GM12878 (cell line): ENCODE measurements at regions of chr20 and their contacts with region 1.

Region 1: GRCh38 chr20:6212903-6213302 is 90.1 kb upstream of the FERMT1 start:
- DNase-seq: no peak
- ATAC-seq: no peak
- H3K4me3 ChIP-seq: no peak overlapping the region
- H3K27ac ChIP-seq: no peak overlapping the region
- H3K4me1 ChIP-seq: no peaks in the 10 kb centered on the region
- H3K27me3 ChIP-seq: no peaks in the 10 kb centered on the region
- CTCF ChIP-seq: no peak
- EP300 ChIP-seq: no peak
- POLR2A ChIP-seq: no peak
- RAD21 ChIP-seq: no peak

Region 2: DNA sequence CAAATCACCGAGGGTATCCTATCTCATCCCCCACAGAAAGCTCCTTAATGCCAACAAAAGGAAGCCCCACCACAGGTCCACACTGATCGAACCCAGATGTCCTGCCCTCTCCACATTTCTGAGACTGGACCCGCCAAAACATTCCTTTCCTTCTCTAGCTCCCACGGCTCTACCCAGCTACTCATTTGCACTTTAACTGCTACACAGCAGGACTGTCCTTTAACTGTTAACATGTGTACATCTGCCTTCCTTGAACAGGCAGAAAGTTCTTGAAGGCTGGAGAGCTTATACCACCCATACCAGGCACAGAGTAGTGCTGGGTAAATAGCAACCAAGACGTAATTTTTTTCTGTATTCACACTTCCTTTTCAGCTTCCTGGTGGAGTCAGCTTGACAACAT is 331.2 kb before region 1 on chr20:
- CTCF ChIA-PET with region 1: no interaction called
- POLR2A ChIA-PET with region 1: no interaction called
- RAD21 ChIA-PET with region 1: no interaction called
- SMC1A ChIA-PET with region 1: no interaction called
- in situ Hi-C with region 1: no loop called
- intact Hi-C with region 1: no loop called
- DNase-seq: no peak
- ATAC-seq: 0 out of 3 replicates have a peak, but pooled peaks have one; percentile 28
- H3K4me3 ChIP-seq: no peak overlapping the region
- H3K27ac ChIP-seq: no peak overlapping the region
- H3K4me1 ChIP-seq: no peaks in the 10 kb centered on the region
- H3K27me3 ChIP-seq: peaks cover 0 to 6% of the 10 kb centered on the region in 2 experiments; a peak in 3 of 4 replicates
- CTCF ChIP-seq: no peak
- EP300 ChIP-seq: no peak
- POLR2A ChIP-seq: no peak
- RAD21 ChIP-seq: no peak

Region 3: GRCh38 chr20:5991623-5992441 is 221.1 kb before region 1 on chr20:
- CTCF ChIA-PET with region 1: no interaction called
- POLR2A ChIA-PET with region 1: no interaction called
- RAD21 ChIA-PET with region 1: no interaction called
- SMC1A ChIA-PET with region 1: no interaction called
- in situ Hi-C with region 1: no loop called
- intact Hi-C with region 1: no loop called
- DNase-seq: no peak
- ATAC-seq: no peak
- H3K4me3 ChIP-seq: no peak overlapping the region
- H3K27ac ChIP-seq: no peak overlapping the region
- H3K4me1 ChIP-seq: peaks cover under 1% of the 10 kb centered on the region; the same call in 1 of the 2 replicates
- H3K27me3 ChIP-seq: no peaks in the 10 kb centered on the region
- CTCF ChIP-seq: no peak
- EP300 ChIP-seq: no peak
- POLR2A ChIP-seq: no peak
- RAD21 ChIP-seq: no peak

Region 4: GRCh38 chr20:6169251-6169650 is 43.7 kb before region 1 on chr20:
- CTCF ChIA-PET with region 1: no interaction called
- POLR2A ChIA-PET with region 1: no interaction called
- RAD21 ChIA-PET with region 1: no interaction called
- SMC1A ChIA-PET with region 1: no interaction called
- in situ Hi-C with region 1: no loop called
- intact Hi-C with region 1: no loop called
- DNase-seq: no peak
- ATAC-seq: peak; percentile 56; the same call in 2 of the 3 replicates
- H3K4me3 ChIP-seq: no peak overlapping the region
- H3K27ac ChIP-seq: no peak overlapping the region
- H3K4me1 ChIP-seq: no peaks in the 10 kb centered on the region
- H3K27me3 ChIP-seq: no peaks in the 10 kb centered on the region
- CTCF ChIP-seq: peak in 1 of 3 experiments; percentile 11; a peak in 2 of 6 replicates
- EP300 ChIP-seq: no peak
- POLR2A ChIP-seq: no peak
- RAD21 ChIP-seq: no peak

Region 5: DNA sequence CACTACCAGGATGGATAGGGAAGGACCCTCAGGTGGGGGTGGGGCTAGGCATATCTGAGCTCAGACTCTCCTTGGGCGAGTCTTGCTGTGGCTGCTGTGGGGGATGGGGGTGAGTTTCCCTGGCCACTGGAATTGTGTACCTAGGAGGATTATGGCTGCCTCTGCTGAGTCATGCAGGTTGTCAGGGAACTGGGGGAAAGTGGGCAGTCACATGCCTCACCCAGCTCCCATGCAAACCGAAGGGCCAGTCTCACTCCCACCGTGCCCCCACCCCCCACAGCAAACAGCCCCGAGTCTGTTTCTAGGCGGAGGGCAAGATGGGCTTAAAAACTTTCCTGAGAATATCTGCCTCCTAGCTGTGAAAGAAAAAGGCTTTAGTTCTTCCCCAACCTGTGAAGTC is 120.2 kb after region 1 on chr20:
- CTCF ChIA-PET with region 1: no interaction called
- POLR2A ChIA-PET with region 1: no interaction called
- RAD21 ChIA-PET with region 1: no interaction called
- SMC1A ChIA-PET with region 1: no interaction called
- in situ Hi-C with region 1: no loop called
- intact Hi-C with region 1: loop called (anchors 10 kb)
- DNase-seq: no peak
- ATAC-seq: no peak
- H3K4me3 ChIP-seq: no peak overlapping the region
- H3K27ac ChIP-seq: no peak overlapping the region
- H3K4me1 ChIP-seq: no peaks in the 10 kb centered on the region
- H3K27me3 ChIP-seq: no peaks in the 10 kb centered on the region
- CTCF ChIP-seq: no peak
- EP300 ChIP-seq: no peak
- POLR2A ChIP-seq: no peak
- RAD21 ChIP-seq: no peak